HepG2 (cell line): ENCODE measurements at regions of chr10 and their contacts with region 1.

Region 1: GRCh38 chr10:123553810-123554430 is 112.2 kb upstream of the GPR26 start:
- DNase-seq: no peak
- ATAC-seq: no peak
- H3K4me3 ChIP-seq: no peak overlapping the region
- H3K27ac ChIP-seq: no peak overlapping the region
- H3K4me1 ChIP-seq: no peaks in the 10 kb centered on the region
- H3K27me3 ChIP-seq: peaks cover 2 to 21% of the 10 kb centered on the region in 2 experiments; a peak in 2 of 5 replicates
- CTCF ChIP-seq: no peak
- EP300 ChIP-seq: no peak
- POLR2A ChIP-seq: no peak
- RAD21 ChIP-seq: no peak

Region 2: GRCh38 chr10:123479640-123480039 is 74.3 kb before region 1 on chr10:
- CTCF ChIA-PET with region 1: no interaction called
- POLR2A ChIA-PET with region 1: no interaction called
- in situ Hi-C with region 1: no loop called
- intact Hi-C with region 1: loop called (anchors 2 kb)
- DNase-seq: no peak
- ATAC-seq: no peak
- H3K4me3 ChIP-seq: no peak overlapping the region
- H3K27ac ChIP-seq: no peak overlapping the region
- H3K4me1 ChIP-seq: no peaks in the 10 kb centered on the region
- H3K27me3 ChIP-seq: peaks cover 2 to 4% of the 10 kb centered on the region in 2 experiments; a peak in 2 of 5 replicates
- CTCF ChIP-seq: no peak
- EP300 ChIP-seq: no peak
- POLR2A ChIP-seq: no peak
- RAD21 ChIP-seq: no peak